ENCODE measurements at regions of chr10 and their contacts with region 1.

Region 1: GRCh38 chr10:107423903-107424302 is 259.4 kb upstream of the SORCS1 start:
- DNase-seq: no peak
- H3K4me3 ChIP-seq: no peak overlapping the region
- H3K27ac ChIP-seq: no peak overlapping the region
- H3K4me1 ChIP-seq: no peaks in the 10 kb centered on the region
- H3K27me3 ChIP-seq: no peaks in the 10 kb centered on the region
- CTCF ChIP-seq: no peak

Region 2: DNA sequence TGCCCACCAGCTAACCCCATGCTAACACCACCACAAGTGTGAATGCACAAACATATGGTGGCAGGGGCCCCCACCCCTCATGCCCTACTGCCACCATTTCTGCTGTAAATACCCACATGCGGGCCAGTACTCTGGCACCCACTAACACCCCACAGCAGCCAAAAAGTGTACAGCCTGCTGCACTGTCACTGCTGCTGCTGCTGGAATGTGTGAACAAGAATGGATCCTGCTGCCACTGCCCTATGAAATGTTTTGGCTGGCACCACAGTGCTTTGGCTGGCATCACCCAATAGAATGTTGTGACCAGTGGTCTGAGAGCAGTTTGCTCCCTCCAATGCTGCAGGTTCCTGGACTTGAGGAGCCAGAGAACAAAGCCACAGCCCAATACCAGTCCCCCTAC is 347.2 kb after region 1 on chr10:
- intact Hi-C with region 1: loop called (anchors 5 kb)
- DNase-seq: no peak
- H3K4me3 ChIP-seq: no peak overlapping the region
- H3K27ac ChIP-seq: no peak overlapping the region
- H3K4me1 ChIP-seq: no peaks in the 10 kb centered on the region
- H3K27me3 ChIP-seq: no peaks in the 10 kb centered on the region
- CTCF ChIP-seq: no peak